HAP-1 (cell line): ENCODE measurements at regions of chr2 and their contacts with region 1.

Region 1: DNA sequence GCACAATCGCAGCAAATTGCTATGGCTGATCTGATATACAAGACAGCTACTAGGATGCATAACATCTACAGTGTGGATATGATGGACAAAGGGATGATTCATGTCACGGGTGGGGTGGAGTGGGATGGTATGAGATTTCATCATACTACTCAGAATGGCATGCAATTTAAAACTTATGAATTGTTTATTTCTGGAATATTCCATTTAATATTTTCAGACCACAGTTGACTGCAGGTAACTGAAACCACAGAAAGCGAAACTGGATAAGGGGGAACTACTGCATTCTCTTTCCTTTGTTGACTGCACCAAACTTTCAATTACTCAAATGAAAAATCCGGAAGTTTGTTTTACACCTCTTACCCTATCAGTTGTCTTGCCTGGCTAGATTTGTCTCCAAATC is 94.4 kb upstream of the NEUROD1 start:
- DNase-seq: no peak
- H3K4me3 ChIP-seq: no peak overlapping the region
- H3K4me1 ChIP-seq: peaks cover 12% of the 10 kb centered on the region
- H3K27me3 ChIP-seq: no peaks in the 10 kb centered on the region

Region 2: GRCh38 chr2:181891258-181891965 is 116.7 kb after region 1 on chr2 and contains the start of gene ITPRID2:
- in situ Hi-C with region 1: loop called (anchors 25 kb)
- DNase-seq: peak; percentile 87 to 89
- H3K4me3 ChIP-seq: peak within 1 kb of the TSS; percentile 67
- H3K4me1 ChIP-seq: peaks cover 31% of the 10 kb centered on the region
- H3K27me3 ChIP-seq: no peaks in the 10 kb centered on the region

Region 3: GRCh38 chr2:182077451-182078142 is 302.9 kb after region 1 on chr2:
- in situ Hi-C with region 1: loop called (anchors 25 kb)
- DNase-seq: peak; percentile 77 to 93
- H3K4me3 ChIP-seq: no peak overlapping the region
- H3K4me1 ChIP-seq: peaks cover 44% of the 10 kb centered on the region
- H3K27me3 ChIP-seq: no peaks in the 10 kb centered on the region

Region 4: DNA sequence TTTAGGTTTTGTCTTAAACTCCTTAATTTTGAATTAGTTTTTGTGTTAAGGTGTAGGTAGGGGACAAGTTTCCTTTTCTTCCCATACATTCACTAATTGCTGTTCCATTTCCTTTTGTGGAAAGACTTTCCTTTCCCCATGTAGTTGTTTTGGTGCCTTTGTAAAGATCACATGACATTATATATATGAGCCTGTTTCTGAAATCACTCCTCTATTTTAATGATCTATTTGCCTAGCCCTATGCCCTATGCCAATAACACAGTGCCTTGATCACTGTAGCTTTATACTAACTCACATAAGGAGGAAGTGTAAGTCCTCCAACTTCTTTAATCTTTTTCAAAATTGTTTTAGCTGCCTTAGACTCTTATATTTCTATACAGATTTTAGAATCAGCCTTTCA is 422.8 kb after region 1 on chr2:
- in situ Hi-C with region 1: no loop called
- DNase-seq: no peak
- H3K4me3 ChIP-seq: no peak overlapping the region
- H3K4me1 ChIP-seq: peaks cover 7% of the 10 kb centered on the region
- H3K27me3 ChIP-seq: no peaks in the 10 kb centered on the region